GM23248 (cell line): ENCODE measurements at regions of chr4 and their contacts with region 1.

Region 1: GRCh38 chr4:13553081-13553480 is 8.8 kb upstream of the NKX3-2 start:
- DNase-seq: no peak
- H3K4me3 ChIP-seq: no peak overlapping the region
- H3K27ac ChIP-seq: no peak overlapping the region
- H3K4me1 ChIP-seq: no peaks in the 10 kb centered on the region
- H3K27me3 ChIP-seq: peaks cover 22% of the 10 kb centered on the region

Region 2: DNA sequence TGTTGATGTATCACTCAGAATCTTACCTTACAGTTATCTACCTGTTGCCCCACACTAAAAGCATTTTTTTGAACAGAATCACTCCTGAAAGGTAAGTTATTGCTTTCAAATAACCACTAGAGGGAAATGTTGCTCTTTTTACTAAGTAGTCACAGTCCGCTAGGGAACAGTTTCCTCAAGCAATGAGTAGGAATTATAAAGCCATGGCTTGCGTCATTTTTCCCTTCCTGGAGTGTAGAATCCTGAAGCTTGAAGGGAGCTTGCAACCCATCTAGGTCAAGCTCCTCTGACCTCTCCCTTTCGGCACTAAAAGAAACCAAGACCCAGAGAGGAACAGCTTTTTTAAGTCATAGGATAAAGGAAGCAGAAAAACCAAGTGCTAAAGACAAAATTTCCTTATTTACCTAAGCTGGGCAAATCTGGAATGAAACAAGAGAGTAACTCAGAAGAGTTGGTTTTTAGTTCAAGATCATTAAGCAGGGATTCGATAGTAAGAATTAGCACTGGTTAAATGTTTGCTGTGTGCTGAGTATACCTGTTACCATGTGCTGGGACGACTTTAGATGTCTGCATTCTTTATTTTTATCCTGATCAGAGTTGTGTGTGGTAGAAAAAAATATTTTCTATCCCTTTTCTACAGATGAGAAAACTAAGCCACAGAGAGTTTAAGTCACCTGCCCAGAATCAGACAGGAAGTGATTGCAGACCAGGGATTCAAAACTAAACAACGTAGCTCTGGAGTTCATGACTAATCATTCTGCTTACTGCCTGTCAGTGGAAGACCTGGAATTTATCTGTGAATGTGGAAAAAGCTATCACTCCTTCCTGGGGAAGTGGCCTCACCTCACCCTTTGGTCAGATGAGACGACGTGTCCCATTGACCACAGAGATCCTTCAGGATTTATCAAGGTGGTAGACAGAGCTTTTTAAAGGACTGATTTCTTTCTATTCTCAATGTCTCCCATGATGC is 700.5 kb before region 1 on chr4:
- in situ Hi-C with region 1: loop called (anchors 5 kb)
- DNase-seq: peak; percentile 81
- H3K4me3 ChIP-seq: no peak overlapping the region
- H3K27ac ChIP-seq: no peak overlapping the region
- H3K4me1 ChIP-seq: no peaks in the 10 kb centered on the region
- H3K27me3 ChIP-seq: peaks cover 4% of the 10 kb centered on the region; the same call in 1 of the 2 replicates

Region 3: GRCh38 chr4:13032936-13033335 is 520.1 kb before region 1 on chr4:
- in situ Hi-C with region 1: no loop called
- DNase-seq: no peak
- H3K4me3 ChIP-seq: no peak overlapping the region
- H3K27ac ChIP-seq: no peak overlapping the region
- H3K4me1 ChIP-seq: no peaks in the 10 kb centered on the region
- H3K27me3 ChIP-seq: no peaks in the 10 kb centered on the region

Region 4: DNA sequence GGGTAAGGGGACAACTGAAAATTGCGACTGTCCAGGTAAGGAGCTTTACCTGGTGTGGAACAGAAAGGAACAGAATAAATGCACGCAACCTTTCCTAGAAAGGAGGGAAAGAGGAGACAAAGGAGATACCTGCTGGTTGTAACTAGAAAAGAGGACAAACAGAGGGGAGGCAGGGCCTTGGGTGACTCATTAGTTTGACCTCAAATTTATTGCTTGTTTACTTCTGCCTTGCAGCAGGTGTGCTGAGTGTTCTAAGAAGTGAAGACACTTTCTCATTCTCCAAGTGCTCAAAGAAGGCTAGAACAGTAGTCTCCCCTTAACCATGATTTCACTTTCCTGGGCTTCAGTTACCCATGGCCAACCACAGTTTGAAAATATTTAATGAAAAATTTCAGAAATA is 197.5 kb after region 1 on chr4:
- in situ Hi-C with region 1: no loop called
- DNase-seq: no peak
- H3K4me3 ChIP-seq: no peak overlapping the region
- H3K27ac ChIP-seq: no peak overlapping the region
- H3K4me1 ChIP-seq: no peaks in the 10 kb centered on the region
- H3K27me3 ChIP-seq: no peaks in the 10 kb centered on the region; the same call in 1 of the 2 replicates

Region 5: GRCh38 chr4:13783800-13784411 is 230.8 kb after region 1 on chr4:
- in situ Hi-C with region 1: no loop called
- DNase-seq: no peak
- H3K4me3 ChIP-seq: no peak overlapping the region
- H3K27ac ChIP-seq: no peak overlapping the region
- H3K4me1 ChIP-seq: no peaks in the 10 kb centered on the region
- H3K27me3 ChIP-seq: peaks cover 11% of the 10 kb centered on the region